ENCODE measurements at regions of chr12 and their contacts with region 1.

Region 1: GRCh38 chr12:121499929-121500793 is 80.7 kb downstream of the KDM2B start:
- DNase-seq: peak; percentile 89
- ATAC-seq: peak; percentile 92

Region 2: GRCh38 chr12:121536899-121537813 is 37.0 kb after region 1 on chr12:
- intact Hi-C with region 1: loop called (anchors 5 kb)
- DNase-seq: peak; percentile 95
- ATAC-seq: peak; percentile 91

Region 3: GRCh38 chr12:121980191-121980891 is 480.2 kb after region 1 on chr12:
- intact Hi-C with region 1: no loop called
- DNase-seq: no peak
- ATAC-seq: no peak

Measured in Right ventricle myocardium superior (tissue), 1 donor.